Tibial artery (tissue), 4 donors: ENCODE measurements at regions of chr3 and their contacts with region 1.

Region 1: DNA sequence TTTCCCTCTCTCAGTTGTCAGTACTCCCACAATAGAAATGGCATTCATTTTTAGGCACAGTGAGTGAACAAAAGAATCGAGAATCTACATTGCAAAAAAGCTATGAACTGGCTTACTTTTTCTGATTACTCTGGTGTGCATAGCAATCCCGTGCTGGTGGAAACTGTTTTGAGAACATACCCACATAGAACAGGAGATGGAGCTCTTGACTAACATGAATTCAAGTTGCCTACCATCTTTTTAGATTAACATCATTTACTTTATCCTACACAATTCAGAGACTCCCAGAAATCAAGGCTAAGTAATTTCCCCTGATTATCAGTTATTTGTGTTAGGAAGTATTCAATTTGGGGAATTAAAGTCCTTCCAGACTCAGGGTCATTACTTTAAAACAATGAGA is 326.6 kb downstream of the ARPP21 start:
- DNase-seq: no peak
- H3K4me3 ChIP-seq: no peak overlapping the region
- H3K27ac ChIP-seq: no peak overlapping the region
- H3K4me1 ChIP-seq: peaks cover 0 to 17% (median 2%) of the 10 kb centered on the region in 4 donors
- H3K27me3 ChIP-seq: no peaks in the 10 kb centered on the region
- CTCF ChIP-seq: peak; percentile 64 to 70

Region 2: GRCh38 chr3:36700537-36701248 is 734.8 kb after region 1 on chr3:
- intact Hi-C with region 1: loop called (anchors 2 kb)
- DNase-seq: peak in 1 of 2 donors; percentile 45
- H3K4me3 ChIP-seq: no peak overlapping the region
- H3K27ac ChIP-seq: no peak overlapping the region
- H3K4me1 ChIP-seq: no peaks in the 10 kb centered on the region
- H3K27me3 ChIP-seq: no peaks in the 10 kb centered on the region
- CTCF ChIP-seq: peak; percentile 76 to 79